ENCODE measurements at regions of chr16 and their contacts with region 1.

Region 1: DNA sequence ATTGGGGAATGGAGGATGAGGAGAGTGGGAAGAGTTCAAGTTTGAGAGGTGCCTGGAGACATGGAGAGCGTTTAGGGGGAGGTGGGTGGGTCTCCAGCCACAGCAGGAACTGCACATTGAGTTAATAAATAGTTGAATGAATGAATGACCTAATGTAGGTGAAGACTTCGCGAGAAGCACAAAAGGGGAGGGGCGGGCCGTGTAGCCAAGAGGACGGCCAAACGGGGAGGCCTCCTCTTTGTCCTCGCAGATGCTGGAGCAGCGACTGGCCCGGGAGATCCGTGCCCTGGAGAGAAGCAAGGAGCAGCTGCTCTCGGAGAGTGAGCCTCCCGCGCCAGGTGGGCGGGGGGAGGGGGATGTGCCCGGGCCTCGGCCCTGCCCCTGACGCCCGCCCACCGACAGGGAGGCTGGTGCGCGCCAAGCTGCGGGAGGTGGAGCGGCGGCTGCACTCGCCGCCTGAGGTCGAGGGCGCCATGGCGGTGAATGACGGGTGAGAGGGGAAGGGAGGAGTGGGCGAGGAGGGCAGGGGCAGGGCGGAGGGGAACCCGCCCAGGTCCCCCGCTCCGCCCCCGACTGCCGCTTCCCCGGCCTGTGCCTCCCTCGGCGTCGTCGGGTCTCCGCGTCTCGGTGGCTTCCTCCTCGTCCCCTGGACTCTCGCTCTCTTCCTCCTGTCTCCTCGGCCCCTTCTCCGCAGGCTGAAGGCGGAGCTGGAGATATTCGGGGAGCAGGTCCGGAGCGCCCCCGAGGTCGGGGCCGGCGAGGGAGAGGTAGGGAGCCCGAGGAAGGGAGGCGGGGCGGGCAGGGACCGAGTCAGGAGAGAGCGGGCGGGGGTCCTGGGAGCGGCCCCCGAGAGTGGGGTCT is 12.9 kb downstream of the SYCE1L start:
- DNase-seq: peak; percentile 77
- ATAC-seq: peak; percentile 83
- H3K4me3 Mint-ChIP-seq: peak overlapping the region; percentile 77
- H3K27ac Mint-ChIP-seq: peak overlapping the region; percentile 79
- H3K4me1 Mint-ChIP-seq: peaks cover 14% of the 10 kb centered on the region
- H3K27me3 Mint-ChIP-seq: no peaks in the 10 kb centered on the region

Region 2: DNA sequence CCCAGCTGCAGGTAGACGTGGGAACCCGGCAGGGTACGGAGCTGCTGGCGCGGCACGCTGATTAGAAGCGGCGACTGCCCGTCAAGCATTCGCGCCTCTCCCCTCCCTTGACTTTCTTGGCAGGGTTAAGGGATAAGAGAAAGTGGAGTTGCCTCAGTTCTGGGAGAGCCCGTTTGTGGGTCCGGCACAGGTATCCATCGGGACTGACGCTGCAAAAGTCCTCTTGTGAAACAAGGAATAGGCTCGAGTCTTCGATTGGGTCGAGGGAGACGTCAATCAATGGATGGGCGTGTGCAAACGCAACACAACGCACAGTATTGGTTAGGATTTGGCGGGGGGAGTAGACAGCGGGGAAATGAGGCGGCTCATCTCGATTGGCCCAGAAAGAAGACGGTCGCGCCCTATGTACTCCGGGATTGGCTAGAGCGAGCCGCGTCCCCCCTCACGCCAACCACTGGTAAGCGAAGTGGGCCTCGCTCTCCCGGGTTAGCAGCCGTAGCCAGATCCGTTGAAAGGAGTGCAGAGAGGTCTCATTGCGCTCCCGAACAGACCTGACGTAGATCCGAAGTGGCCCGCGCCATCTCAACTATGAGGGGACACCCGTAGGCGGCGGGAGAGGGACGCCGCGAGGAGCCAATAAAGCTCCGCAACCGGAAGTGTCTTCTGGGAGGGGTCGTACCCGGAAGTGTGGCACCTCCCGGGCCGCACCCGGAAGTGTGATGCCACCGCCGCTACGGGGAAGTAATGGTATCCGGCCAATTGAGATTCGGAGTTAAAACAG is 21.4 kb before region 1 on chr16 and contains the start of gene MON1B:
- CTCF ChIA-PET with region 1: no interaction called
- POLR2A ChIA-PET with region 1: interaction called, 25 read pairs
- DNase-seq: peak; percentile 97
- ATAC-seq: peak; percentile 98
- H3K4me3 Mint-ChIP-seq: peak within 1 kb of the TSS; percentile 86
- H3K27ac Mint-ChIP-seq: peak within 1 kb of the TSS; percentile 100
- H3K4me1 Mint-ChIP-seq: peaks cover 38% of the 10 kb centered on the region
- H3K27me3 Mint-ChIP-seq: no peaks in the 10 kb centered on the region
- total RNA-seq, gene MON1B: 66.3 to 67.0 TPM

Measured in activated CD8-positive, alpha-beta T cell treated with anti-CD3 and anti-CD28 coated beads, Interleukin-2, amount 10 ng/mL, durations not matched to agents 7 days and 5 days (primary cell).